AG04449 (cell line): ENCODE measurements at regions of chr3 and their contacts with region 1.

Region 1: DNA sequence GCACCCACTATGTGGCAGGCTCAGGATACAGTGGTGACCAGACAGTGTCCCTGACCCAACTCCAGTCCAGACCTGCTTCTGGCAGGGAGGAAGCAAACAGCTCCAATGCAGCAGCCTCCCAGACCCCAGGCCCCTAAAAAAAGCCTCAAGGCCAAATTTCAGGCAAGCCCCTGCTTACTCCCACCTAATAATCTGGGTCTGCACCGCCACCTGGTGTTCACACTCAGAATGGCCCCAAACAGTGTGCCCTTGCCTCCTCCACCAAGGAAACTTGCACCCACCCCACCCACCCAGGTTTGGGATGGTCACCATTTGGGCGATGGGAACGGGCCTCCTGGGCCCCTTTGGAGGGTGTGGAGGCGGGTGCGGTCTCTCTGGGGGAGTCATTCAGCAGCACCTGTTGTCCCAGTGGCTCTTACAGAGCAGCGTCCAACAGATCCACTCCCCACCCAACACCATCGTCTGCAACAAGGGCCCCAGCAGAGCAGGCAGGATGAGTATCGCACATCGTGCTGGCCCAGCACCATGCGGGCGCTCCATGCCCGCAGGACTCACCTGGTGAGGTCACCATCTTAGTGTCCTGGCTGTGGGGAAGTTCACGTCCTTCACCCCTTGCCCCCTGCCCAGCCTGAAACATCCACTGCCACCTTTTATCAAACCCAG is 17.3 kb downstream of the C3orf18 start:
- DNase-seq: no peak
- H3K4me3 ChIP-seq: no peak overlapping the region
- CTCF ChIP-seq: peak; percentile 71

Region 2: DNA sequence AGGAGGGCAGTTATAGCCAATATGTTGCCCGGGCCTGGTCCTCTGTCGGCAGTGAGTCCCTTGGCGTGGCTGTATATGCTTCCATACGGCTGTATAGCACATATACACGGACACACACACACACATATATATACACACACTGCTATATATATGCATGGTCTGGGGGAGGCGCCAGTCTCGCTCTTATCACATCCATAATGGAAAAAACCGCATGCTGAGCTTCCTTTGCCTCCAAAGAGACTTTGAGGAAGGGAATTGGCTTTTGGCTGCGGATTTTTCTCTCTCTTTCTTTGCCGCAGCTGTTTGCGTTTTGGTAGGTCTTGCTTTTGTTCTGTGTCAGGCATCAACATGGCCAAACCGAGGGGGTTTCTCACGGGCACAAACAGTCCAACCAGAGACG is 179.6 kb before region 1 on chr3:
- CTCF ChIA-PET with region 1: interaction called, 12 read pairs
- POLR2A ChIA-PET with region 1: no interaction called
- DNase-seq: no peak
- H3K4me3 ChIP-seq: no peak overlapping the region
- CTCF ChIP-seq: peak; percentile 15

Region 3: DNA sequence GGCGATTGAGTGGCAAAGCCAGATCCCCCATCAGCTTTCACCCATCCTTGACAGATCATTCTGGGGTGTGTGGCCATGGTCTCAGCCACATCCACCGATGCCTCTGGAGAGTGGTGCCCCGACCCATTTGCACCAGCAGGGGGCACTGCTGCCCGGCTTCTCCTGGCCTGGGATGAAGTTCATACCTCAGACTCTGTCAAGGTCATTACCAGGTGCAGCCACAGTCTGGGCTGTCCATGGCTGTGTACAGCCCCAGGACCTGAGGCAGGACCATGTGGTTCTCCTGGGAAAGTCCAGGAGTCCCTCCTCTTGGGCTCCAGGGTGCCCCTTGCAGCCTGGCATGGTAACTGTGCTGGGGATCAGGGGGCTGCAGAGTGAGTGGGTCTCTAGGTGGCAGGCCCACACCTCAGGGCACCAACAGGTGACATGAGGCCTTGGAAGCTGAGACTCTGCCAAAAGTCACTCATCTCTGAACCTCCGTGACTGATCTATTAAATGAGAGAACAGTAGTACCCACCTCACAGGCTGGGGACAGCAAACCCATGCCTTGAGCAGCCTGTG is 114.0 kb before region 1 on chr3:
- CTCF ChIA-PET with region 1: interaction called, 23 read pairs
- POLR2A ChIA-PET with region 1: no interaction called
- DNase-seq: no peak
- H3K4me3 ChIP-seq: no peak overlapping the region
- CTCF ChIP-seq: peak; percentile 74

Region 4: GRCh38 chr3:50519471-50520089 is 30.6 kb before region 1 on chr3:
- CTCF ChIA-PET with region 1: interaction called, 57 read pairs
- POLR2A ChIA-PET with region 1: no interaction called
- DNase-seq: no peak
- H3K4me3 ChIP-seq: no peak overlapping the region
- CTCF ChIP-seq: peak; percentile 96

Region 5: GRCh38 chr3:50525987-50526386 is 24.2 kb before region 1 on chr3:
- CTCF ChIA-PET with region 1: interaction called, 30 read pairs
- POLR2A ChIA-PET with region 1: no interaction called
- DNase-seq: no peak
- H3K4me3 ChIP-seq: no peak overlapping the region
- CTCF ChIP-seq: no peak

Region 6: GRCh38 chr3:50568947-50569749 is 18.9 kb after region 1 on chr3 and contains the start of gene HEMK1:
- CTCF ChIA-PET with region 1: interaction called, 333 read pairs
- POLR2A ChIA-PET with region 1: no interaction called
- DNase-seq: peak; percentile 54
- H3K4me3 ChIP-seq: peak within 1 kb of the TSS; percentile 97
- CTCF ChIP-seq: no peak